Calu3 (cell line): ENCODE measurements at regions of chr20 and their contacts with region 1.

Region 1: GRCh38 chr20:54350415-54350814 is 125.0 kb upstream of the DOK5 start:
- DNase-seq: no peak
- H3K4me3 Mint-ChIP-seq: no peak overlapping the region
- H3K27ac Mint-ChIP-seq: peak overlapping the region; percentile 67
- H3K4me1 Mint-ChIP-seq: peaks cover 33% of the 10 kb centered on the region
- H3K27me3 Mint-ChIP-seq: no peaks in the 10 kb centered on the region
- CTCF ChIP-seq: no peak

Region 2: DNA sequence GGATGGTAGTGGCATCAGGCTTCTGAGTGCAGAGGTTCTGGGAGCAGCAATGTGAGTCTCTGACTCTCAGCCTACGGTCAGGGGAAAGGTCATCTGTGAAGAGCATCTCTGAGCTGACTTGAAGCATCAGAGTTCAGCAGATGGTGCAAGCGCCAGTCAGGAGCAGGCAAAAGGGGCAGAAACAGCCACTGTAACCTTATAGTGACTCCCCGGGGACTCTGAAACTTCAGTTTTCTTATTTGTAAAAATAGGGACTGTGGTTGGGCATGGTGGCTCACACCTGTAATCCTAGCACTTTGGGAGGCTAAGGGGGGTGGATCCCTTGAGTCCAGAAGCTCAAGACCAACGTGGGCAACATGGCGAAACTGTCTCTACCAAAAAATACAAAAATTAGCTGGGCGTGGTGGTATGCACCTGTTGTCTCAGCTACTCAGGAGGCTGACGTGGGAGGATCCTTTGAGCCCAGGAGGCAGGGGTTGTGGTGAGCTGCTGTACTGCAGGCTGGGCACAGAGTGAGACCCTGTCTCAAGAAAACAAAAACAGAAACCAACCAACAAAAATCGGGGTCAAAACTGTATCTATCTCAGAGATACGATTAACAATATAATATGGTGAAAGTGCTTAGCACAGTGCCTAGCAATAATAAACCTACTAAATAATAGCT is 259.5 kb before region 1 on chr20:
- CTCF ChIA-PET with region 1: interaction called, 10 read pairs
- intact Hi-C with region 1: no loop called
- DNase-seq: no peak
- H3K4me3 Mint-ChIP-seq: no peak overlapping the region
- H3K27ac Mint-ChIP-seq: no peak overlapping the region
- H3K4me1 Mint-ChIP-seq: no peaks in the 10 kb centered on the region
- H3K27me3 Mint-ChIP-seq: peaks cover 10% of the 10 kb centered on the region
- CTCF ChIP-seq: no peak